ENCODE measurements at regions of chr13 and their contacts with region 1.

Region 1: DNA sequence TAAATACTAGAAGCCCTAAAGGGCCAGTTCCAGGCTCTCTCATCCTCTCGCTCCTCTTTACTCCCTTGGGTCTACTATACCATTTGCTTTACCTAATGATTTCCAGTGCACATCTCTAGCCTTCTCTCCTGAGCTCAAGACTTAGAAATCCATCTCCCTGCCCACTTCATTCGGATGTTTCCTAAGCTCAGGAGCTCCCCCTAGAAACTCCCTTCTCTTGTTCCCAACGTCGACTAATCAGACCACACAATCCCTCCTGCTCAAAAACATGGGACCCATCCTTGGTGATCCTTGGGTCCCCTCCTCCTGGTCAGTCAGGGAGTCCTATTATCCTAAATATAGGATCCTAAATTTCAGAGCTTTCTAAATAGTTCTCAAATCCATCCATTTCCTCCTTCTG is 21.1 kb upstream of the STK24 start:
- DNase-seq: no peak

Region 2: GRCh38 chr13:98570929-98571372 is 27.1 kb before region 1 on chr13:
- CTCF ChIA-PET with region 1: interaction called, 10 read pairs
- POLR2A ChIA-PET with region 1: no interaction called
- DNase-seq: no peak

Measured in HEK293T (cell line).